Lower leg skin (tissue), 4 donors: ENCODE measurements at regions of chr16 and their contacts with region 1.

Region 1: DNA sequence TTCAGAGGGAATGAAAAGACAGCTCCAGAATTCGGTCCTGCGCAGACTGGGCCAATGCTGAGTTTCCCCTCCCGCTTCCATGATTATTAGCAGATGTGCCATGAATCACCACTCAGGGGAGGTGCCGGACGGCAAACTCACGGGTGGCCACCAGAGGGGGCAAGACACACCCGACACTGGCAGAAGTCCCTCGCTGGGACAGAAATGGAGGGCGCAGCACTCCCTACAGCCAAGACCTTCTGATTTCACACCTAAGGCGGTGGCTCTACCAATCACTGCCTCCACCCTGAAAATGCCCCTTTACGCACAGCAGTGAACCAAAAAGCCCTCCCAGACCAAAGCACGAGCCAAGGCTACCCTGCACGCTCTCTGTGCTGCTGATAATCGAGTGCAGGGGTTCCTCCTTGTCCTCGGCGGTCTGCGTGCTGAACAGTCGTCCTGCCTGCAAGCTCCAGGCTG is 26.8 kb downstream of the TRAP1 start:
- DNase-seq: peak; percentile 89 to 98
- H3K4me3 ChIP-seq: no peak overlapping the region
- CTCF ChIP-seq: peak in 1 of 3 donors; percentile 83
- POLR2A ChIP-seq: no peak

Region 2: DNA sequence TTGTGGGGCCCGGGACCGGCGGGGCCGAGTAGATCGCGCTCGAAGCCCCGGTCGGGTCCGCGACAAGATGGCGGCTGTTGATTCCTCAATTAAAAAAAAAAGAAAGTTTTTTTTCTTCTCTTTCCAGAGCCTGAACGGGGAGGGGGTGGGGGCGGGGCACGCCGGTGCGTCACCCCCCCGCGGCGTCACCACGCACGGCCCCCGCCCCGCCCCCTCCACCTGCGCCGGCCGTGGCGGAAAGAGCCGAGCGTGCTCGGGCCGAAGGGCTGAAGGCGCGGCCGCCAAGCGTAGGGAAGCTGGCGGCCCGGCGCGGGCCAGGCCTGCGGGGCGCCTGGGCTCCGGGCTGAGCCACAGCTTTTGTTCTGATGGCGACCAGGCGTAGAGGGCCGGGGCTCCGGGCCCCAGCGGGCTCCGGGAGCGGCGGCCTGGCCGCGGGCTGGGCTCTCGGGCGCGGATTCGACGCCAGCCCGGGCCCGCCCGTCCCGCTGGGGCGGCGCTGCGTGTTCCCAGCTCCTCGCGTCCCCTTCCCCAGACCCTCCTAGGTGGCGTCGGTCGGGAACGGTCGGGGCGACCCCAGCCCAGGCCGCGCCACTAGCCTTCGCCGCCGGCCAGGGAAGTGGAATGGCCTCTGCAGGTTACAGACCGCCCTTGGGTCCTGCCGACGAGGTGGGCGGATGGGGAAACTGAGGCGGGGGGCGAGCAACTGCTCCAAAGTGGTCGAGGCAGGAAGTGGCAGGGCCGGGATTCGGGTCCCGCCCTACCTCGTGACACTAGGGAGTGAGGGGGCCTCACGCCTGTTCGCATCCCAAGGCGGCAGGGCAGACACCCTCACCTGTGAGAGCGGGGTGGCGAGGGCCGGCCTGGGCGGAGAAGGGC is 190.4 kb after region 1 on chr16 and contains the start of gene CREBBP:
- intact Hi-C with region 1: loop called (anchors 10 kb)
- DNase-seq: peak; percentile 74 to 96
- H3K4me3 ChIP-seq: peak within 1 kb of the TSS; percentile 79
- CTCF ChIP-seq: no peak
- POLR2A ChIP-seq: no peak
- total RNA-seq, gene CREBBP: 45.5 to 152 (median 65.7) TPM

Region 3: DNA sequence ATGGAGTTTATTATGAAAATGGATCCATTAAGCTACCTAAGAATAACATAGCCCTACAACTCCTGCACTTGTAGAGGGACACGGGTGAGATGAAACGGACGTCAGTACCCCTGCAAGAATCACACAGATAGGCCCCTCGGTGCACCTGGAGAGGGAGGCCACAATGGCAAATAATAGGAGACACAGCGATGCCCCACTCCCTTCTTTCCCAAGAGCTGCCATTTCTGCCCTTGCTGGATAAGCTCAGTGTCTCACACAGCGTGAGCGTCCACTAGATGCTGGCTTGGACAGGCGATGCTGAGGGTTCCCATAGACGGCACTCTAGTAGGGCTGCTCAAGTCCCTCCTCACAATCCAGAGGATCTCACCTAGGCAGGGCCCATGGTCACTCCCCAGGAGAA is 358.0 kb after region 1 on chr16:
- intact Hi-C with region 1: no loop called
- DNase-seq: peak in 1 of 2 donors; percentile 21
- H3K4me3 ChIP-seq: no peak overlapping the region
- CTCF ChIP-seq: no peak
- POLR2A ChIP-seq: no peak